Natural killer cell (primary cell): ENCODE measurements at regions of chr18 and their contacts with region 1.

Region 1: GRCh38 chr18:63224630-63225029 is 94.9 kb downstream of the BCL2 start:
- DNase-seq: peak in 1 of 2 donors; percentile 35
- ATAC-seq: peak in 2 of 3 donors; percentile 39 to 57
- H3K4me3 ChIP-seq: no peak overlapping the region
- H3K4me3 Mint-ChIP-seq: no peak overlapping the region
- H3K27ac ChIP-seq: no peak overlapping the region
- H3K27ac Mint-ChIP-seq: peak overlapping the region; percentile 10 to 21
- H3K4me1 ChIP-seq: peaks cover 19% of the 10 kb centered on the region
- H3K4me1 Mint-ChIP-seq: peaks cover 55 to 60% of the 10 kb centered on the region in 2 donors
- H3K27me3 ChIP-seq: no peaks in the 10 kb centered on the region
- H3K27me3 Mint-ChIP-seq: no peaks in the 10 kb centered on the region
- CTCF ChIP-seq: no peak

Region 2: GRCh38 chr18:63207143-63207790 is 17.4 kb before region 1 on chr18:
- intact Hi-C with region 1: loop called (anchors 2 kb)
- DNase-seq: peak in 1 of 2 donors; percentile 34
- ATAC-seq: peak in 2 of 3 donors; percentile 44 to 46
- H3K4me3 ChIP-seq: no peak overlapping the region
- H3K4me3 Mint-ChIP-seq: peak overlapping the region; percentile 51
- H3K27ac ChIP-seq: peak overlapping the region; percentile 43
- H3K27ac Mint-ChIP-seq: peak overlapping the region; percentile 69 to 75
- H3K4me1 ChIP-seq: peaks cover 53% of the 10 kb centered on the region
- H3K4me1 Mint-ChIP-seq: peaks cover 78 to 83% of the 10 kb centered on the region in 2 donors
- H3K27me3 ChIP-seq: no peaks in the 10 kb centered on the region
- H3K27me3 Mint-ChIP-seq: no peaks in the 10 kb centered on the region
- CTCF ChIP-seq: no peak

Region 3: DNA sequence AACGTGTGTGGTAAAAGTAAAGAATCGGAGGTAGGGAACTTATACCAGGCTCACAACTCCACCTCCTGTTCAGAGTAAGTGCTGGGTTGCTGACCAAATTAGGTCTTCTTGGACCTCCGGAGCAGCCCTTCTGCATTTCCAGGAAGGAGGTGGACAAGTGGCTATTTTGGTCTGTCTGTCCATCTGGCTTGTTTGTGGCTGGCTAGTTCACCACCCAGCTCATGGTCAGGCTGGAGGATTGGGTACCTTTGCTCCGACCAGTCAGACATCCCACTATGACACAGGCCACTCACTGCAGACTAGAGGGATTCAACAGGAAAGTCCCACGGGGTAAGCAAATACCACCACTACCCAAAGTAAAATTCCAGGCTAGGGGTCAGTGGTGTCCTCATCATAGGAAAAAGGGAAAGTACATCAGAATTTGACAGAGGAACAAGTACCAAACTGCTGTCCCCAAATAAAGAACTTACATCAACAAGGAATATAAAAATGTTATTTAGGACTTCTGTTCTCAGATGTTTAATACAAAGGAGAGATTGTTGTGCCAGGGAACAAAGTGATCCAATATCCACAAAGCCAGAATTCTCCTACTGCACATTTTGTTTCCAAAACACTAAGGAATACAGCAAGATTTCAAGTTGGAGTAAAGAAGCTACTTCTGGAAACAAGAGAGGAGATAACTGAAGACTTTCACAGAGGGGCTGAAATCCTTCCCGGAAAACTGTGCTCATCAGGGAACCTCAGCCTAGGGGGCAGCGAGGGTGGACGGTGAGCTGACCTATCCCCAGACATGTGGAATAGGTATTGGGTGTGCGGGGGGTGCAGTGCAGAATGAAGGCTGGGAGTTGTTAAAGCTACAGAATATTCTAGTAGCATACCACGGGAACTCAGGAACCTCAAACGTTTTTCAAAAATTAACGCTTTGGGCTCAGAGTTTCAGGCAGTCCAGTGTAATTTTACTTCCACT is 38.0 kb after region 1 on chr18:
- intact Hi-C with region 1: loop called (anchors 5 kb)
- DNase-seq: no peak
- ATAC-seq: no peak
- H3K4me3 ChIP-seq: no peak overlapping the region
- H3K4me3 Mint-ChIP-seq: no peak overlapping the region
- H3K27ac ChIP-seq: no peak overlapping the region
- H3K27ac Mint-ChIP-seq: peak overlapping the region in 1 of 2 donors; percentile 18
- H3K4me1 ChIP-seq: peaks cover 14% of the 10 kb centered on the region
- H3K4me1 Mint-ChIP-seq: peaks cover 41 to 49% of the 10 kb centered on the region in 2 donors
- H3K27me3 ChIP-seq: no peaks in the 10 kb centered on the region
- H3K27me3 Mint-ChIP-seq: no peaks in the 10 kb centered on the region
- CTCF ChIP-seq: no peak